ENCODE measurements at regions of chr4 and their contacts with region 1.

Region 1: DNA sequence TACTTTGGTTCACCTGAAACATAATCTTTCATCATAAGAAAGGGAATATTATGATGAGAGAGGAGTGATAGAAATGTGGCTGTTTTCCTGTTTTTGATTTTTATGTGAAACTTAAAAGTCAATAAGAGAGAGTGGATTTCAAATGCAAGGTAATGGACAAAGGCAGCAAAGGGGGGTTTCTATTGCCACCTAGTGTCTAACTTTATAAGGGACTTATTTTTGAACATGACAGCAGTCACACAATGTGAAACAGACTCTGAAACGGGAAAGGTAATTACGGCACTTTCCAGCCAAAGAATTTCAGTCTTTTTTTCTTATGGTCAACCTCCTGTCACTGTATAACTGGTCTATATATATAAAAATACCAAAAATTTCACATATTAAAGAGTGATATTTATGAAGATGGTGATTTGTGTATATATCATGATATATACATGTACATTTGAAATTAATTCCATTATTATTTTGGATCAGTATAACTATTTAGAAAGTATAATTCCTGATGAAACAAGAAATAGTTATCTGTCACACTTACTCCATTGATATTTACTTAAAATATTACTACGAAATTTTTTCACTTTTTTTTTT is 127.1 kb downstream of the FBXO8 start:
- DNase-seq: peak; percentile 87
- H3K4me3 ChIP-seq: peak overlapping the region; percentile 17
- H3K27ac ChIP-seq: no peak overlapping the region
- H3K4me1 ChIP-seq: peaks cover 53% of the 10 kb centered on the region
- H3K27me3 ChIP-seq: no peaks in the 10 kb centered on the region
- CTCF ChIP-seq: peak; percentile 83

Region 2: GRCh38 chr4:173522123-173522950 is 634.0 kb before region 1 on chr4:
- CTCF ChIA-PET with region 1: no interaction called
- POLR2A ChIA-PET with region 1: no interaction called
- intact Hi-C with region 1: loop called (anchors 5 kb)
- DNase-seq: peak; percentile 88
- H3K4me3 ChIP-seq: peak overlapping the region; percentile 47
- H3K27ac ChIP-seq: peak overlapping the region; percentile 82
- H3K4me1 ChIP-seq: peaks cover 20% of the 10 kb centered on the region
- H3K27me3 ChIP-seq: no peaks in the 10 kb centered on the region
- CTCF ChIP-seq: no peak

Region 3: DNA sequence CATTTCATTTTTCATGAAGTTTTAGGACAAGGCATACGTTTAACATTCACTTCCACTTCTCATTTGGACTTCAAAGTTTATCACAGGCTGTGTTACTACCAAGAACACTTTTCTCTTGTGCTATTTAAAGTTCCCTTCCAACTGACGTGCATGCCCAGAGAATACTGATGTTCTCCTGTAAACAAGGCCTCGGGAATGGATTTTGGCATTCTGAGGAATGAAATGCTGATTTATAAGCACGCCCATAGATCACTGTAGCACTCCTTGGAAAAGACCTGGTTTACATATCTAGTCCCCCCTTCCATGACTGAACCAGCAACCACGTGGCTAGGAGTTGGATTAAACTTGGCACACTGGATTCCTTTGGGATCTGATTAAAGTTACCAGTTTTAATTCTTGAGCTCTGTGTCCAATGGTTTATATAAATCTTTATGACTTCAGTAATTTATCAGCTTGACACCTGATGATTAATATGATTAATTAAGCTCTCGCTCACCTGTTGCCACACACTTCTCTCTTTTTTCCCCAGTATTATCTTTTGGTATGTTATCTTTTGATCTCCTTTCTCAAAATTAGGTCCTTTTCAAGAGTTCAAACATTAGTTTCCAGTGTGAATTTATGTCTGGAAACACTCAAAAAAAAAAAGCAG is 503.9 kb before region 1 on chr4:
- CTCF ChIA-PET with region 1: no interaction called
- POLR2A ChIA-PET with region 1: no interaction called
- intact Hi-C with region 1: no loop called
- DNase-seq: no peak
- H3K4me3 ChIP-seq: no peak overlapping the region
- H3K27ac ChIP-seq: no peak overlapping the region
- H3K4me1 ChIP-seq: no peaks in the 10 kb centered on the region
- H3K27me3 ChIP-seq: no peaks in the 10 kb centered on the region
- CTCF ChIP-seq: no peak

Region 4: GRCh38 chr4:173801876-173802661 is 354.3 kb before region 1 on chr4:
- CTCF ChIA-PET with region 1: no interaction called
- POLR2A ChIA-PET with region 1: no interaction called
- intact Hi-C with region 1: loop called (anchors 2 kb)
- DNase-seq: peak; percentile 92
- H3K4me3 ChIP-seq: no peak overlapping the region
- H3K27ac ChIP-seq: peak overlapping the region; percentile 36
- H3K4me1 ChIP-seq: peaks cover 29% of the 10 kb centered on the region
- H3K27me3 ChIP-seq: no peaks in the 10 kb centered on the region
- CTCF ChIP-seq: no peak

Region 5: DNA sequence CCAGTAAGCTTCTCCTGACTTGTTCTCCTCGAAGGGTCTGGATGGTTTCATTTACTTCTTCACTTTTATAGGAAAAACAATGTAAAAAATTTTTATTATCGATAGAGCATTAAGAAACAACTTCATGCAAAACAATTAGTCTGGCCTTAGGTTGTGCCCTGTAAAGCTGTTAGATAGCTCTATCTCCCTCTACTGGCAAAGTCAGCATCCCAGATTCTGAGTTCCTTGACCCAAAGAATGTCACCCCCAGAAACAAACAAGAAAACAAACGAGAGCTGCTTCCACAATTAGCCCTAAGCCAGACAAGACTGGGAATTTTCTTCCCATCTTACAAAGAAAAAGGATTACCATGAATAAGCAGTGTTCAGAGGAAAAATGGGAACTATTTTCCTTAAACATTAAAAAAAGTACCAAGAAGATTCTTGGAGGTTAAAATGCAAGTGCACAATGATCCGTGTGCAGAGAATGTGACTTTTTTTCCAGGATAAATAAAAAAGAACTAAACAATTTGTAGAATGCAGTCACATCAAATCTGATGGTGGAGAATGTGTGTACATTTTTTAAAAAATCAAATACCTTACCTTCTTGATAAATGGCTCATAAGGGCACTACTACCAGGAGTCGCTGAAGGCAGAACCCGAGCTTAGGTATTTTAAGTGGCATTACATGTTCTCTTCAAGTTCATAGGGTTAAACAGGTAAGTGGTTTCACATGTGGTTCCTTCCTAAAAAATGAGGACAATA is 166.0 kb before region 1 on chr4:
- CTCF ChIA-PET with region 1: no interaction called
- POLR2A ChIA-PET with region 1: no interaction called
- intact Hi-C with region 1: loop called (anchors 5 kb)
- DNase-seq: peak; percentile 79
- H3K4me3 ChIP-seq: no peak overlapping the region
- H3K27ac ChIP-seq: peak overlapping the region; percentile 65
- H3K4me1 ChIP-seq: peaks cover 31% of the 10 kb centered on the region
- H3K27me3 ChIP-seq: no peaks in the 10 kb centered on the region
- CTCF ChIP-seq: peak; percentile 83

Region 6: DNA sequence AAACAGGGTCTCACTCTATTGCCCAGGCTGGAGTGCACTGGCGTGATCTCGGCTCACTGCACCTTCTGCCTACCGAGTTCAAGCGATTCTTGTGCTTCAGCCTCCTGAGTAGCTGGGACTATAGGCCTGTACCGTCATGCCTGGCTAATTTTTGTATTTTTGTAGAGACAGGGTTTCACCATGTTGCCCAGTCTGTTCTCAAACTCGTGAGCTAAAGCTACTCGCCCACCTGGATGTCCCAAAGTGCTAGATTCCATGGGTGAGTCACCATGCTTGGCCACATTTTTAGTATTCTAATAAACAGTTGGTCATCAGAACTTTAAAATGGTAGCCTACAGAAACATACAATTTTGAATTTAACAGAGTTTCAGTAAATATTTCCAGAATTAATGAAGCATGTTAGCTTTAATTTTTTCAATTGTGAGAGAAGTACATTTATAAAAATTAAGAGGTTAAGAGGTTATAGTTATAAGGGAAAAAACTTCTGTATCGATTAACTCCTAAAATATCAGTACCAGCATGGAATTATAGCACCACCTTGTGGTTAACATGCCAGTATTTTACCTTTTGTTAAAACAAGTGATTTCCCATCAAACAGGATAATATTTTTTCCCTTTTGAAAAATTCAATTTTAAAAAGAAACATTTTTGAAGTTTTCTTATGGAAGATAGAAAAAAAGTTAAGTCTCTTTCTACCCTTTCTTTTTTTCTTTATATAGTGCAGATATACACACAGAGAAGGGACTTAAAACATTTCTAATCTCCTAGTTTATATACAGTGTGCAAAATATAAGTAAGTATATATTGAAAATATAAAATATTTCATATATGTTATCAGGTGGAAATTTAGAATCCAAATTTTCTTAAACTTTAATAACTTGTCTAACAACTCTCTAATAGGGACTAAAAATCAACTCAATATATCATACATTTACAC is 162.8 kb after region 1 on chr4:
- CTCF ChIA-PET with region 1: no interaction called
- POLR2A ChIA-PET with region 1: no interaction called
- intact Hi-C with region 1: loop called (anchors 5 kb)
- DNase-seq: peak; percentile 55
- H3K4me3 ChIP-seq: no peak overlapping the region
- H3K27ac ChIP-seq: no peak overlapping the region
- H3K4me1 ChIP-seq: peaks cover 35% of the 10 kb centered on the region
- H3K27me3 ChIP-seq: no peaks in the 10 kb centered on the region
- CTCF ChIP-seq: peak; percentile 83